CD4-positive, alpha-beta T cell (primary cell): ENCODE measurements at regions of chr13 and their contacts with region 1.

Region 1: GRCh38 chr13:50911937-50912795 is 2.6 kb downstream of the RNASEH2B start:
- DNase-seq: peak; percentile 85 to 95 (median 90)
- ATAC-seq: peak; percentile 46
- H3K4me3 ChIP-seq: peak overlapping the region; percentile 94
- H3K4me3 Mint-ChIP-seq: peak overlapping the region; percentile 90
- H3K27ac ChIP-seq: peak overlapping the region; percentile 22 to 93
- H3K27ac Mint-ChIP-seq: peak overlapping the region; percentile 93
- H3K4me1 ChIP-seq: peaks cover 40% of the 10 kb centered on the region
- H3K4me1 Mint-ChIP-seq: peaks cover 60% of the 10 kb centered on the region
- H3K27me3 ChIP-seq: no peaks in the 10 kb centered on the region
- H3K27me3 Mint-ChIP-seq: no peaks in the 10 kb centered on the region
- CTCF ChIP-seq: peak; percentile 88

Region 2: DNA sequence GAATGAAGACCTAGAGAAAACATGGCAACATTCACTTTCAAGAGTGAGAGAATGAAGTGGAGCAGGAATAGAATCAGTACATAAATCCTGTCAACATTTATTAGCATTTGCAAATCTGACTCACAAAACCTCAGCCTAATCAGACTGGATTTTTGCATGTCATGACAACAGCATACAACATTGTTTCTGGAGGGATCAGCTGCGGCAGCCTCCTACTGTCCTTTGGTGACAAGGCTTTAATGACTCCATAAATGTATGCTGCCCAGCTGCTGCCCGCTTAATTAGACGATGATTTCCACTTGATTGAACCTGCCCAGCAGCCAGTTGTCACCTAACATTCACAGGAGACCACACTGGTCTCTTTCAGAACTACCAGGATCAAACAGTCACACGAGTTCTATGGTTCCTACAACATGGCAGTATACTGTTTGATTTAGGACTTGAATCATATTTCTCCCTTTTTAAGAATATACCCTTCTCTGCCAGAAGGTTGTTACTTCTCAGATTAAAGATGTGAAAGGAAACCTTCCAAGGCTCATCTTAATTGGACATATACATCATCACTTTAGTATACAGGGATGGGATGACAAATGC is 1230.2 kb before region 1 on chr13:
- CTCF ChIA-PET with region 1: no interaction called
- POLR2A ChIA-PET with region 1: no interaction called
- intact Hi-C with region 1: loop called (anchors 10 kb)
- DNase-seq: no peak
- ATAC-seq: no peak
- H3K4me3 ChIP-seq: no peak overlapping the region
- H3K4me3 Mint-ChIP-seq: no peak overlapping the region
- H3K27ac ChIP-seq: no peak overlapping the region
- H3K27ac Mint-ChIP-seq: peak overlapping the region; percentile 45
- H3K4me1 ChIP-seq: peaks cover 4% of the 10 kb centered on the region
- H3K4me1 Mint-ChIP-seq: peaks cover 44% of the 10 kb centered on the region
- H3K27me3 ChIP-seq: no peaks in the 10 kb centered on the region
- H3K27me3 Mint-ChIP-seq: no peaks in the 10 kb centered on the region
- CTCF ChIP-seq: no peak

Region 3: GRCh38 chr13:49936085-49936940 is 975.9 kb before region 1 on chr13 and contains the start of gene SPRYD7:
- CTCF ChIA-PET with region 1: interaction called, 6 read pairs
- POLR2A ChIA-PET with region 1: interaction called, 7 read pairs
- intact Hi-C with region 1: loop called in 1 of 2 experiments (anchors 5 kb)
- DNase-seq: peak; percentile 86 to 97 (median 92)
- ATAC-seq: peak; percentile 82
- H3K4me3 ChIP-seq: peak within 1 kb of the TSS; percentile 91
- H3K4me3 Mint-ChIP-seq: peak within 1 kb of the TSS; percentile 98
- H3K27ac ChIP-seq: no peak within 1 kb of the TSS
- H3K27ac Mint-ChIP-seq: peak within 1 kb of the TSS; percentile 83
- H3K4me1 ChIP-seq: peaks cover 18% of the 10 kb centered on the region
- H3K4me1 Mint-ChIP-seq: peaks cover 19% of the 10 kb centered on the region
- H3K27me3 ChIP-seq: no peaks in the 10 kb centered on the region
- H3K27me3 Mint-ChIP-seq: no peaks in the 10 kb centered on the region
- CTCF ChIP-seq: peak; percentile 74
- total RNA-seq, gene SPRYD7: 1.1 to 1.5 TPM

Region 4: DNA sequence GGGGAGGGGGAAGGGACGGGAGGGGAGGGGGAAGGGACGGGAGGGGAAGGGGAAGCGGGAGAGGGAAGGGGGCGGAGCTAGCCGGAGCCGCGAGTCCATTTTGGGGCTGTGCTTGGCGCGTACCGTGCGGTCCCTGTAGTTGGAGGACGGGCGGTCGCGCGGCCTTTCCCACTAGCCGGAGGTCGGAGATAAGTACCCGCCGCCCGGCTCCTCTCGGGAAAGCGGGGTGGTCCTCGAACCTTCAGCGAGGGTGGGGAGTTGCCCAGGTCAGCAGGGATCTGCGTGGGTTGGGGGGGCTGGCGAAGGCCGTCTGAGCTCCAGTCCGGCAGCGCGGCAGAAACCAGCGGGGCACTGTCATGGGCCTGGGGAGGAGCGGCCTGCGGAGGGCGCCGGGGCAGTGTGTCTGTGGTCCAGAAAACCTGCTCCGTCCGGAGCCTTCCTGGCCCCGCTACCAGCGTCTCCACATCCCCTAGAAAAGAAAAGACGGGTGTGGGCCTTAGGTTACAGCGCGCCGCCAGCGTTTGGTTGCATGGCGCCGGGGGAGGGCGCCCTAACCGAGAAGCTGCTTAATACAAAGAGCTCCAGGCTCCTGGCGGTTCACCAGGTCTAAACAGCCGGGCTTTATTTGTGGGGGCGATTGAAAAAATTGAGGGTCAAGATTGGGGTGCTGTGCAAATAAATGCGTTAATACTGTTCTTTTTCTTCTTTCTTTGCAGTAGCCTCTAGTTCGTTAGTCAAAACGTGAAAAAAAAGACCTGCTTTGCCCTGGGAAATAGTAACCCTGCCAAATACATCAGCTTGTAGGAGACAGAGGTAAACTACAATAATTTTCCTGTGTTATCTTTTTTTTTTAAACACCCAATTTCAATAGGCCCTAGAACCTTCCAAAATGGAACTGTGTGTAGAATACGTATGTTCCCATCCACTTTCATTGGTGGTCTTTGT is 914.9 kb before region 1 on chr13 and contains the start of gene TRIM13:
- CTCF ChIA-PET with region 1: interaction called, 17 read pairs
- POLR2A ChIA-PET with region 1: interaction called, 94 read pairs
- intact Hi-C with region 1: loop called (anchors 1 to 5 kb)
- DNase-seq: peak; percentile 72 to 91 (median 80)
- ATAC-seq: peak; percentile 83
- H3K4me3 ChIP-seq: peak within 1 kb of the TSS; percentile 96
- H3K4me3 Mint-ChIP-seq: peak within 1 kb of the TSS; percentile 97
- H3K27ac ChIP-seq: peak within 1 kb of the TSS; percentile 91
- H3K27ac Mint-ChIP-seq: peak within 1 kb of the TSS; percentile 90
- H3K4me1 ChIP-seq: peaks cover 32% of the 10 kb centered on the region
- H3K4me1 Mint-ChIP-seq: peaks cover 56% of the 10 kb centered on the region
- H3K27me3 ChIP-seq: no peaks in the 10 kb centered on the region
- H3K27me3 Mint-ChIP-seq: no peaks in the 10 kb centered on the region
- CTCF ChIP-seq: peak; percentile 95
- total RNA-seq, gene TRIM13: 32.5 to 32.9 TPM

Region 5: DNA sequence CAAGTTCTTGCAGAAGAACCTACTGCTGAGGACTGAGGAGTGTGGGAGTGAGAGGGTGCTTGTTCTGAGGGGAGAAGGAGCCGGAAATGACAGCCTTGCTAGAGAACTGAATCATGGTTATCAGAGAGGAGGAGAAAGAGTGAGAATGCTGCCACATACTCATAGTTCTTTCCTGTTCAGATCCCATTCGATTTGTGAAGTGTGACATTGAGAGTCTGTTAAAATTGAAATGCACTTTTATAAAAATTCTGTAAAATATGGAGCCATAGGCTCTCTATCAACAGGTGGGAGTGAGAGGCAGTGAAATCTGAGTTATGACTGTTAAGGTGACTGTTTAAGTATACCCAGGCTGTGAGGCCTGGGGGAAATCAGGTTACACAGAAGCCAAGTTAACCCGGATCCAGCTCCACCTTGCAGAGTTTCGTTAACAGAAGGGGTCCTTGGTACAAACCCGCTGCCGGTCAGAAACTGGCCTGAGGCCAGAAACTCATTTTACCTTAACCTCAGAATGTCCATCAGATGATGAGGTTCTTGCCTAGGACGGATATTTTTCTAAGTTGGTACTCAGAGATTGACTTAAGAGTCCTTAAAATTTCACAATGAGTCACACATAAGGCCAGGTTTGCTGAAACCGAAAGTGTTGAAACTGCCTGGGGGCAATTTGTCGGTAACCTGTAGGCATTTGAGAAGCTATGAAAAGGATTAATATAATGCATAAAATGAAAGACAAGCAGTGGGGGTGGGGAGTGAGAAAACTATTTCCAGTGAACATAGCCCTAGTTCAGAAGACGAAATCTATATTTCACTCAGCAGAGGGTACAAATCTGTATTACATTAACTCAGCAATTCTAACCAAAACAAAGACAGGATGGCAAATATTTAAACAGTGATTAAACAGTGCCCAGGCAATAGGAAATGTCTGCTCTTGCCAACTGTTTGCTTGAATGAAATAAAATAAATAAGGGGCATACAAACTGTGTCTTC is 546.5 kb before region 1 on chr13:
- CTCF ChIA-PET with region 1: interaction called, 3 read pairs
- POLR2A ChIA-PET with region 1: no interaction called
- intact Hi-C with region 1: loop called in 1 of 2 experiments (anchors 10 kb)
- DNase-seq: peak in 12 of 14 experiments; percentile 8 to 82 (median 22)
- ATAC-seq: peak; percentile 75
- H3K4me3 ChIP-seq: peak overlapping the region; percentile 33
- H3K4me3 Mint-ChIP-seq: peak overlapping the region; percentile 77
- H3K27ac ChIP-seq: peak overlapping the region; percentile 24 to 80
- H3K27ac Mint-ChIP-seq: peak overlapping the region; percentile 89
- H3K4me1 ChIP-seq: peaks cover 35% of the 10 kb centered on the region
- H3K4me1 Mint-ChIP-seq: peaks cover 43% of the 10 kb centered on the region
- H3K27me3 ChIP-seq: no peaks in the 10 kb centered on the region
- H3K27me3 Mint-ChIP-seq: no peaks in the 10 kb centered on the region
- CTCF ChIP-seq: no peak

Region 6: DNA sequence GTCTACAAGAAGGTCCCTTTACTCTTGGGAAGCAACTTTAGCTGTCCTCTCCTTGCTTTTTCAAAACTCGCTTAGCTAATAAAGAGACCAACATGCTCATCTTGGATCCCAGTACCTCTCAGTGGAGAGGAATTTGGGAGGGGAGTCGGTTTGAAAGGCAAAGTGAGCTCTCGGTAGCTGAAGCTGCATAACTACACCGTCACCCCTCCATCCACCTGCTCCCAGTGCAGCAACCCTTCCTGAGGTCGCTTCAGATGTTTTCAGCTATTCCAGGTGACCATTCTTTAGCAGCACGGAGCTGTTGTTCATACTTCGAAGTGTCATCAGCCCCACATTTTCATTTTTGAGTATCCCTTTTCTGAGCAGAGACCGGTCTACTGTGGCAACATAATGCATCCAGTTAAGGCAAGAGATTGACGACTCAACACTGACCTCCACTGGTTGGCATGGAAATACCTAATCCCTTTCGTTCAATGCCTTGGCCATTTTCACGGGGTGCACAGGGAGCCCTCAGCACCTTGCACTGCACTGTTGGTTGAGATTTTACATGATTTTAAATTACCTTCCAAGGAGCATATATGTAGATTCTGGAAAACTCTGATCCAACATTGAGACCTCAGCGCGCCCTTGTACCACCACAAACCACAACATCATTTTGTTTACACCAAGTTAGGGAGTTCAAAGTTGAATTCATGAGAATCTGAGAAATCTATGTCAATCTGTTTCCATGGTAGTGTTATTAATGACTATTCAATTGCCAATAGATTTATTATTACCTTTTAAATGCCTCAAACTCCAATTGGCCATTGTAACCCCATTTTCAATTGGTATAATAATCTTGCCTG is 110.9 kb before region 1 on chr13:
- CTCF ChIA-PET with region 1: interaction called, 5 read pairs
- POLR2A ChIA-PET with region 1: interaction called, 4 read pairs
- intact Hi-C with region 1: loop called (anchors 1 to 2 kb)
- DNase-seq: peak; percentile 19 to 85 (median 48)
- ATAC-seq: peak; percentile 88
- H3K4me3 ChIP-seq: no peak overlapping the region
- H3K4me3 Mint-ChIP-seq: no peak overlapping the region
- H3K27ac ChIP-seq: no peak overlapping the region
- H3K27ac Mint-ChIP-seq: no peak overlapping the region
- H3K4me1 ChIP-seq: peaks cover 6% of the 10 kb centered on the region
- H3K4me1 Mint-ChIP-seq: peaks cover 7% of the 10 kb centered on the region
- H3K27me3 ChIP-seq: no peaks in the 10 kb centered on the region
- H3K27me3 Mint-ChIP-seq: no peaks in the 10 kb centered on the region
- CTCF ChIP-seq: peak; percentile 75

Region 7: DNA sequence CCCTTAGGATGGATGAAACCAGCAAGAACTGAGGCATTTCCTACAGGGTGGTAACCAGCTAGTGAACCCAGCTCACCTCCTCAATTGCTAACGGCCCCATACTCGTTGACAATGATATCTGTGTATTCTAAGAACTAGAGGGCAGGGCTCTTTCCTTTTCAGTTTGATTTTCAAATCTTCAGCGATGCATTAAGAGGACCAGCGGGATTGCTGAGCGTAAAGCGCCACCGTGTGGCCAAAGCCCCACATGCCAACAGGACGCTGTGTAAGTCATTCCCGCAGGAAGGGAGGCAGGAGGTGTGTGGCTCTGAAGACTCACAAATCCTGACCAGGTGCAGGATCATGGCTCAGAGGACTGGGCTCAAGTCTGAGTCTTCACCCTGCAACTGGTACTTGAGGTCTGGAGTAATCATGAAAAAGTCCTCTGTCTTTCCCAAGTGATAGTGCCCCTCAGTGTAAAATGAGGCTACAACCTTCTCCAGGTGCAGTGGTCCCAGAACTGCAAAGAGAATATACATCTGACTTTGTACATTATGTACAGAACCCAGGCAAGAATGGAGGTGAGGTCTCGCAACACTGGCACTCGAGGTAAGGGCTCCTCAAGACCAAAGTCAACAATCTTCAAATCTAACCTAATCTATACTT is 158.0 kb after region 1 on chr13:
- CTCF ChIA-PET with region 1: no interaction called
- POLR2A ChIA-PET with region 1: no interaction called
- intact Hi-C with region 1: loop called in 1 of 2 experiments (anchors 1 kb)
- DNase-seq: peak; percentile 57 to 84 (median 72)
- ATAC-seq: peak; percentile 85
- H3K4me3 ChIP-seq: no peak overlapping the region
- H3K4me3 Mint-ChIP-seq: no peak overlapping the region
- H3K27ac ChIP-seq: no peak overlapping the region
- H3K27ac Mint-ChIP-seq: no peak overlapping the region
- H3K4me1 ChIP-seq: peaks cover 9% of the 10 kb centered on the region
- H3K4me1 Mint-ChIP-seq: peaks cover 7% of the 10 kb centered on the region
- H3K27me3 ChIP-seq: peaks cover 6 to 18% of the 10 kb centered on the region in 2 experiments
- H3K27me3 Mint-ChIP-seq: peaks cover 26% of the 10 kb centered on the region
- CTCF ChIP-seq: peak; percentile 93